HEK293T (cell line): ENCODE measurements at regions of chr3 and their contacts with region 1.

Region 1: DNA sequence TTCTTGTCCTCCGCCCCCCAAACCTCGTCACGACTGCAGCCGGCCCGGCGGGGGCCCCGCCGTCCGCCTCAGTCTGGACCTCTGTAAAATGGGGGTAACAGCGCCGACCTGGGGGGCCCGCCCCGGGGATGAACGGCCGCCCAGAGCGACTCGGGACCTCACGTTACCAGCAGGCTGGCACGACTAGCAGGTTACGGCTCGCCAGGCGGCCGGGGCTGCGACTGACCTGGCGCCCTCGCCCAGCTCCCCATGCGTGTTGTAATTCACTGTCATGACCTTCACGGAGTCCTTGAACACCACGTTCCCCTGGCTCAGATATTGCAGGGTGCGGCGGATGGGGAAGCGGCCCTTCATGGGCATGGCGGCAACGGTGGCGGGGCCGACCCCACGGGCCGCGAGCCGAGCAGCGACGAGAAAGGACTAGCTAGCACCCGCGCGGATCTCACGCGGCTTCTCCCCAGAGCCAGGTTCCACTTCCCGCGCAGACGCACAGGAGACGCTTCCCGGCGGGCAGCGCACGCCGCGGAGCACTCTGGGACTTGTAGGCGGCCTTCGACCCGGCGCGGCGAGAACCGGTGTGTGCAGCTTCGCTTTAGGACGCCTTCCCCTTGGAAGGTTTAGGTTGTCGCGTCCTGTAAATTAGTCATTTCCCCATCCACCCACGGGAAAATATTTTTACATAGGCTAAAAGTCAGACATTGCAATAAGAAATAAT is at the start of gene MRPS25:
- DNase-seq: peak; percentile 96

Region 2: DNA sequence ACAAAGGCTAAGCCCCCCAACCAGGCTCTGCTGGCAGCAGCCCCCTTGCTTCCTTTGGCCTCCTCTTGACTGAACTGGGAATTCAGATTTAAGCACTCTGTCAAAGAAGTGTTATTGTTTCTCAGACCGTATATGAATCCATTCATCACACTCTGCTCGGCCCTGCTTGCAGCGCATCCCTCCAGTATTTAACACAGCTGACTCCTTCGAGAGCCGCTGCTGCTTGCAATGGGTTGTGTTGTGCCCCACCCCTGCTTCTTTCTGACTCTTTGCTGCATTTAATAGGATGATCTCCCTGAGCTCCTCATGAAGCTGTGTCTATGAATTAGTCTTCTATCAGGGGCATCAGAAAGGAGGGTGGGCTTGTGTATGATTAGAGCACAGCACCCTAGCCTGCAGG is 358.9 kb before region 1 on chr3:
- CTCF ChIA-PET with region 1: no interaction called
- POLR2A ChIA-PET with region 1: no interaction called
- DNase-seq: no peak

Region 3: GRCh38 chr3:14847613-14848541 is 217.1 kb before region 1 on chr3:
- CTCF ChIA-PET with region 1: no interaction called
- POLR2A ChIA-PET with region 1: no interaction called
- DNase-seq: no peak

Region 4: DNA sequence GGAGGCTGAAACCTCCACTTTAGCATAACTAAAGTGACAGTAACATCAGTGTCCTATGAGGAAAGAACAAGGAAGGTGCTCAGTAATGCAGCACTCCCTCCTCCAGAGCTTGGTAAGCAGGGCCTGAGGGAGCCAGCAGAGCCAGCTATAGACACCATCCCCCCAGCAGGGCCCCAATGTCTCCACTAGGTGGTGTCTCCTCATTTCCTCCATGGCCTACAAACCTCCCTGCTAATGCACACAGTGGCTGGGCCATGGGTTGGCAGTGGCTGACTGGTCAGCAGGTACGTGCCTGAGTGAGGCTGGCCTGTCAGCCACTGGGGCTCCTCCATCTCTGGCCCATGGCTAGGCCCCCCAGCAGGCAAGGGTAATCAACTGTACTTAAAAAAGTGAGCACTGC is 13.5 kb before region 1 on chr3:
- CTCF ChIA-PET with region 1: interaction called, 4 read pairs
- POLR2A ChIA-PET with region 1: interaction called, 13 read pairs
- DNase-seq: peak; percentile 74

Region 5: GRCh38 chr3:15098503-15099363 is 33.7 kb after region 1 on chr3 and contains the start of gene RBSN:
- CTCF ChIA-PET with region 1: no interaction called
- POLR2A ChIA-PET with region 1: interaction called, 15 read pairs
- DNase-seq: peak; percentile 92

Region 6: DNA sequence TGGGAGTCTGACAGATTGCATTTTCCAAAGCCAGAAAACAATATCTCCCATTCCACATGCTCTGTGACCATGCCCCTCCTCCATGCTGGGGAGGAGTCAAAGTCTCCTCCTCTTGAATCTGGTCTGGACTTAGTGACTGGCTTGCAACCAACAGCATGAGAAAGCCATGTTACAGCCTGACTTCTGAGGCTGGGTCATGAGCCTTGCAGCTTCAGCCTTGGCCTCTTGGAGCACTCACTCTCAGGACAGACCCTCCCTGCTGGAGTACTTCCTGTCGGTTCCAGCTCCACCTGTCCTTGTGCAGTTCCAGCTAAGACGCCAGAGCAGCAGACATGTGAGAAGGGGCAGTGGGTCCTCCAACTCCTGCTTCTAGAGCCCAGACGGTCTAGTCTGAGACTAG is 83.6 kb after region 1 on chr3:
- CTCF ChIA-PET with region 1: no interaction called
- POLR2A ChIA-PET with region 1: no interaction called
- DNase-seq: peak; percentile 62